ENCODE measurements at regions of chr2 and their contacts with region 1.

Region 1: DNA sequence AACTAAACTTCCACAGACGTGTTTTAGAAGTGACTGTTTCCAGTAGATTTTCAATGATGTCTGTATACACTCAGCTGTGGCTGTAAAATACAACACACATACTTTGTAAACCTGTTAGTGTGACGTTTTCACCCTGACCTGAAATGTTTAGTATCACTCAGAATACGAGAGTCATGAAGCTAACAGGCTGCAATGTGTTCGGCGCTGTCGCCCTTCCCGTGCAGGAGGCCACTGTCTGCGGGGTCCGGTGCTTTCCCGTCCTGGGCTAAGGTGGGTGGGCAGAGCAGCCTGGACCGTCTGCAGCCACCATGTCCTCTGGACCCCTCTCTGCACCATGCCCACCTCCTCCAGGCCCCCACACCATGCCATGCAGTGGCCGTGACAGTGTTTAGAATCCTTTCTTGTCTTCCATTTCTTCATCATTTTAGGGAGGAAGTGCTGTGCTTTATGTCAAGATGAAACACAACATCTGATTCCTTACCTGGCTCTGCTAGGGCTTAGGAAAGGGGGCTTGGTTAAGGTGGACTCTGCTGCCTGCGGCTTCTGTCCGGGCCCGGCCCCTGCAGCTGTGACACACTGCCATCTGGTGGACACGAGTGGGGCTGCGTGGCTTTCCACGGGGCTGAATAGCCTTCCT is 53.8 kb upstream of the RBM44 start:
- DNase-seq: peak; percentile 77
- H3K4me3 ChIP-seq: no peak overlapping the region
- H3K27ac ChIP-seq: no peak overlapping the region
- H3K4me1 ChIP-seq: peaks cover 3% of the 10 kb centered on the region
- H3K27me3 ChIP-seq: no peaks in the 10 kb centered on the region
- CTCF ChIP-seq: peak; percentile 99

Region 2: GRCh38 chr2:237512774-237513466 is 231.8 kb before region 1 on chr2:
- CTCF ChIA-PET with region 1: interaction called, 3 read pairs
- POLR2A ChIA-PET with region 1: no interaction called
- intact Hi-C with region 1: loop called (anchors 10 kb)
- DNase-seq: peak; percentile 90
- H3K4me3 ChIP-seq: no peak overlapping the region
- H3K27ac ChIP-seq: no peak overlapping the region
- H3K4me1 ChIP-seq: no peaks in the 10 kb centered on the region
- H3K27me3 ChIP-seq: peaks cover 7% of the 10 kb centered on the region
- CTCF ChIP-seq: peak; percentile 97

Region 3: DNA sequence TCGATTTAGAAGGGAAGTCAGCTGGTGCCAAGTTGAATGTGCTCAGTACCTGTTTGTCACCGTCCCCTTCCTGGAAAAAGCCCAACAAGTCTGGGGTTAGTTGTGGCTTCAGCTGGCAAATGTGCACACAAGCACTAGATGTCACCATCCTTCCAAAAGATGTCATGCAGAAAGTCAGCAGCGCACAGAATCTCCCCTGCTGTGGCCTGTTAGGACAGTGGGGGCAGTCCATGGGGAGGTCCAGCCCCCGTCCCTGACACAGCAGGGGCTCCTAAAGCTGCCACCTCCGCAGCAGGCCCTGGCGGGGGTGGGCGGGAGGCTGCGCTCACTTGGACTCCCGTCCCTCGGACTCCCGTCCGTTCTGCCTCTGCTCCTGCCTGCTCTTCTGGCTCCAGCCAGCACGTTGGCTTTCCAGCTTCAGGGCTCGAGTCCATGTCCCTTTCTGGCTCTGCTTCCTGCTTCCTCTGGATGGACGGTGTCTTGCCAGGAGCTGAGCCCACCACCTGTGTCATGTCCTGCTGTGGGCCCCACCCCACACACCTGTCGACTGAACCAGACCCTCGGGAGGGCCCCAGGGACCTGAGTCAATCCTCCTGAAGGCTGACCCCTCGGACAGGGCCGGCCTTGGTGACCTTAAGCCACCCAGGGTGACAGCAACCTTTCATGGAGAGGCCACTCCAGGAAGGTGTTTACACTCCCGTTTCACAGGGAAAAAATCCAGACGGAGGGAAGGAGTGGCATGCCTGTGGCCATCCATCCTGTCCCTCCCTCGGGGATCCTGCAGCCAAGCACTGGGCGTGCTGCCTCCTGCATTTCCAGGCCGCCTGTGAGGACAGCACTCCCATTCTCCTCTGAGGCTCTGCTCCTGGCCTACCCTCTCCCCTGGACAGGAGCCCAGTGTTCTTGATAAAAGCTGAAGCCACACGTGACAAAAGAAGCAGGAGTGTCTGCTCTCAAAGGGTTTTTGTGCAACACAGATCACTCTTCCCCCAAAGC is 162.7 kb before region 1 on chr2:
- CTCF ChIA-PET with region 1: no interaction called
- POLR2A ChIA-PET with region 1: no interaction called
- intact Hi-C with region 1: loop called (anchors 5 kb)
- DNase-seq: peak; percentile 63
- H3K4me3 ChIP-seq: peak overlapping the region; percentile 13
- H3K27ac ChIP-seq: no peak overlapping the region
- H3K4me1 ChIP-seq: no peaks in the 10 kb centered on the region
- H3K27me3 ChIP-seq: no peaks in the 10 kb centered on the region
- CTCF ChIP-seq: peak; percentile 68

Region 4: DNA sequence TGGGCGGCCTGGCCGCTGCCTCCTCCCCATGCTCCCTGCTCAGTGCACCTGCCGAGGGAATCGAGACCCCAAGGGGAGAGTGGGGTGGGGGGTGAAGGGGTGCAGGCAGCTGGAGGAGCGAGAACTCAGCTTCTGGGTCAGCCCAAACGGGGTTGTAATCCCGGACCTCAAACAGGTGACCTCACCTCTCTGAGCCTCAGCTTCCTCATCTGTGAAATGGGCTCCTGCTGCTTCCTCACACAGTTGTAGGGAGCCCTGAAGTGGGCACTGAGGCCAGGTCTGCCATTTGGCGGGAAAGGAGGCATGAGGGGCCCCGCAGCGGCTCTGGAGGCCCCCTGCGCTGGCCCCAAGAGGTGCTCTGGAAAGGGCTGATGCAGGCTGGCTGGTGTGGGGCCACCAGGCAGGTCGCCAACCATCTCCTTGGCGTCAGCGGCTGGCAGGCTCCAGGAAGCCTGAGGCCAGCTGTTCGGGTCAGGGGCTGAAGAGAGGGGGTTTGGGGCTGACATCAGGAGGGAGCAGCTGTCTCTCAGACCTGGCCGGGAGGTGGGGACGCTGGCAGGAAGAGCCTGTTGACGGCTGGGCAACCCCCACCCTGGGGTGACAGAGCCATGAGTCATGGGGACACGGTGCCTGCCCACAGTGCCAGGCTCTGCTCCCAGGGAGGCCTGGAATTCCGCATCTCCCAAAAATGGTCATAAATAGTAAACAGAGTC is 398.7 kb after region 1 on chr2:
- CTCF ChIA-PET with region 1: no interaction called
- POLR2A ChIA-PET with region 1: no interaction called
- intact Hi-C with region 1: no loop called
- DNase-seq: no peak
- H3K4me3 ChIP-seq: no peak overlapping the region
- H3K27ac ChIP-seq: no peak overlapping the region
- H3K4me1 ChIP-seq: no peaks in the 10 kb centered on the region
- H3K27me3 ChIP-seq: no peaks in the 10 kb centered on the region
- CTCF ChIP-seq: no peak

Measured in A673 (cell line).